Vagina (tissue), 2 donors: ENCODE measurements at regions of chr15 and their contacts with region 1.

Region 1: DNA sequence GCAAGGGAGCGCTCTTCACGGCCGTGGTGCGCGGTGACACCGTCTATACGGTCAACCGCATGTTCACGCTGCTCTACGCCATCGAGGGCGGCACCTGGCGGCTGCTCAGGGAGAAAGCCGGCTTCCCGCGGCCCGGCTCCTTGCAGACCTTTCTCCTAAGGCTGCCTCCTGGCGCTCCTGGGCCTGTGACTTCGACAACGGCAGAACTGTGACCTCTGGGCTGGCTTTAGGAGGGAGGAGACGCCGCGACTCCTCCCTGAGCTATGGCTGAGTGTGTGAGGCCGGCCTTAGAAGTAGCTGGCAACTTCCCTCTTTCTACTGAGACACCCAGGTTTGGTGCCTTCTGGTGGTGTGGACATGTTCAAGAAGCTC is 1.4 kb downstream of the KBTBD13 start:
- DNase-seq: no peak
- H3K4me3 ChIP-seq: peak overlapping the region in 1 of 2 donors; percentile 17
- H3K27ac ChIP-seq: no peak overlapping the region
- H3K4me1 ChIP-seq: peaks cover 14% of the 10 kb centered on the region
- H3K27me3 ChIP-seq: no peaks in the 10 kb centered on the region
- CTCF ChIP-seq: peak; percentile 37 to 58 (median 50)
- POLR2A ChIP-seq: no peak

Region 2: DNA sequence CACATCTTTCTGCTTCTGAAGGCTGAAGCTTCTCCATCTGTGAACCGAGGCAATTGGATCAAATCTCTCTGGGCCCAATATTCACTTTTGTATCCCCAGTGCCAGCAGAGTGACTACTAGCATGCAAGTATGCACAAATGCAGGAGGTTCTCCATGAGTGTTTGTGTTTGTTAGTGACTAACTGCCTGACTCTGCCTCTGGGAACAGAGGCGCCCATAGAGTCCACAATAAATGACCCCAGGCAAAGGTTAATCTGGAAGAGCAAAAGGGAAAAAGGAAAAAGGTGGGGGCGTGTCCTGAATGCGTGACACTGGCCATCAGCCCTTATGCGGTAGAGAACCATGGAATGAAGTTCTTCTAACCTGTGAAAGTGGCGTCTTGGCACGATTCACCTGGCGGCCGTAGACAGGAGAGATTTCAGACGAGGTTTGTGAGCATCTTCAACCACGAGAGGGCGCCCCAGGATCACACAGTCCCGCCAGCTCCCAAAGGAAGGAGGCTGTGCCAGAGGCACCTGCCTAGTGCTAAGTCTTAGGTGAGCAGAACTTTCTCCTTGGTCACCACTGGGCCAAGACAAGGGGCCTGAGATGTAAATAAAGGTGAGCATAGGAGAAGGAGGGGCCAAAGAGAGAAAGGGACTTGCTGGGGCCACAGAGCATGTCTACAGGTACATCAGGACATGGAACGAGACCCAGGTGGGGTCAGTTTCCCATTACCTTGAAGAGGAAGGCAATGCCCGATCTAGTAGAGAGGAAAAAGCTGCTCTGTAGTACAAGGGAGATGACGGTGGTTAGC is 346.8 kb before region 1 on chr15:
- intact Hi-C with region 1: no loop called
- DNase-seq: no peak
- H3K4me3 ChIP-seq: no peak overlapping the region
- H3K27ac ChIP-seq: no peak overlapping the region
- H3K4me1 ChIP-seq: no peaks in the 10 kb centered on the region
- H3K27me3 ChIP-seq: no peaks in the 10 kb centered on the region
- CTCF ChIP-seq: peak; percentile 78 to 94 (median 91)
- POLR2A ChIP-seq: no peak

Region 3: DNA sequence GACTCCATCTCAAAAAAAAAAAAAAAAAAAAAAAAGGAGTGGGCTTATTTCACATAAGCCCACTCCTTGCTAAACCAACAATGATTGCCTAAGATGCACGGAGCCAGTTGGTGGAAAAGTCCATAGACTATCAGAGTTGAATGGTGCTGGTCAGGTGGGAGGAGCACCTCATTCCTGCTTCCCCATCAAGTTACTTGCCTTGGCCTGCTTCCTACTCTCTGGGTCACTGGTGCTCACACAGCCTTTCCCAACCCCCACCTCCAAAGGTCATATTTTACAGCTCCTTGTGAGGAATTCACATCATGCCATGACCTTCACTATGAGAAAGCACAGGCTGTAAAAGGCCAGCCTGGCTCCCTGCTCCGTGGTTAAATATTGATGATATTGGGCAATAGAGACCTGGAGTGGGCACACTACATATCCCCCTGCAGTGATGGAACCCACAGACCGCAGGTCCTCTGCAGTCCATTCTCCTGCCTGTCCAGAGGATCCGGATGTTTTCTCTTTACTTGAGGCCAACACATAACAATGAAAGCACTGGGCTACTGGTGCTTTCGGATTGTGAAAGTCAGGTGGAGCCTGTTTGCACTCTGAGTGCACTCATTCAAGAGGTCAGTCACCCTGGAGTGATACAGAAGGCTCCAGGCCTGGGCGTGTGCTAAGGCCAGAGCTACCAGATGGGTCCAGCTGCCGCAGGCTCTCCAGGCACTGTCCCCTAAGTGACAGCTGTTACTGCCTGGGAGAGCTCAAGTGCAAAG is 33.1 kb before region 1 on chr15 and contains the start of gene SLC51B:
- intact Hi-C with region 1: loop called (anchors 5 kb)
- DNase-seq: no peak
- H3K4me3 ChIP-seq: no peak within 1 kb of the TSS
- H3K27ac ChIP-seq: no peak within 1 kb of the TSS
- H3K4me1 ChIP-seq: peaks cover 41% of the 10 kb centered on the region
- H3K27me3 ChIP-seq: no peaks in the 10 kb centered on the region
- CTCF ChIP-seq: no peak
- POLR2A ChIP-seq: no peak
- total RNA-seq, gene SLC51B: not detected